Ovary (tissue), 10 donors: ENCODE measurements at regions of chr22 and their contacts with region 1.

Region 1: GRCh38 chr22:46183733-46184132 is 33.4 kb downstream of the PPARA start:
- DNase-seq: no peak
- H3K4me3 ChIP-seq: no peak overlapping the region
- H3K27ac ChIP-seq: no peak overlapping the region
- H3K4me1 ChIP-seq: no peaks in the 10 kb centered on the region
- H3K27me3 ChIP-seq: no peaks in the 10 kb centered on the region
- CTCF ChIP-seq: no peak
- EP300 ChIP-seq: no peak
- POLR2A ChIP-seq: no peak

Region 2: DNA sequence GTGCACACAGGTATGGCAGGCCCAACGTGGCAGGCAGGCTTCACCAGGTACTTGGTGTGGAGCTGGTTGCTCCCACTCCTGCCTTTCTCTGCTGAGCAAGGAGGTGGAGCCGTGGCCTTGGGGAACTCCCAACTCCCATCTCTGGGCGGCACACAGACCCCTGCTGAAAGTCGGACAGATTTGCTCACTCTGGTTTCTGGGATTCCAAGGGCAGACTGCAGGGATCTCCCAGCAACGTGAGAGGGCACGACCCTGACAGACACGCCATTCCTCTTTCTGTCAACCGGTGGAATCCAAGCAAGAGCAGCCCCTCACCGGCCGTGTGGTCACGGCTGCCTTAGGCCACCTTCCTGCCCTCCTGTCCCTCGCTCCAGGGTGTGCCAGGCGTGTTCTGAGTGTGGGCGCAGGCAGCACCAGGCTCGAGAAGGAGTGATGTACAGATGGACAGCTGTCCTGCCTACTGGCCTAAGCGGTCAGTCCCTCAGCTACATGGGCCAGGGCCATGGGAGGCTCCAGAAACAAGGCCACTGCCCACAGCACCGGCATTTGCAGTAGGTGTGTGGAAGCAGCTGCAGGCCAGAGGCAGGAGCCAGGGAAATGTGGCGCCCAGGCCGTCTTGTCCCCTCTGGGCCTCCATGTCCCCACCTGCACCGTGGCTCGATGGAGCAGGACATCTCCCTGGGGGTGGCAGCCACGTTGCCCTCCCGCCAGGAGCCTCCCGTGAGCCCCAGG is 47.1 kb before region 1 on chr22:
- intact Hi-C with region 1: loop called in 1 of 4 experiments (anchors 1 kb)
- DNase-seq: peak in 3 of 5 donors; percentile 29 to 40 (median 35)
- H3K4me3 ChIP-seq: no peak overlapping the region
- H3K27ac ChIP-seq: no peak overlapping the region
- H3K4me1 ChIP-seq: peaks cover 16% of the 10 kb centered on the region
- H3K27me3 ChIP-seq: no peaks in the 10 kb centered on the region
- CTCF ChIP-seq: no peak
- EP300 ChIP-seq: no peak
- POLR2A ChIP-seq: no peak